ENCODE measurements at regions of chr12 and their contacts with region 1.

Region 1: DNA sequence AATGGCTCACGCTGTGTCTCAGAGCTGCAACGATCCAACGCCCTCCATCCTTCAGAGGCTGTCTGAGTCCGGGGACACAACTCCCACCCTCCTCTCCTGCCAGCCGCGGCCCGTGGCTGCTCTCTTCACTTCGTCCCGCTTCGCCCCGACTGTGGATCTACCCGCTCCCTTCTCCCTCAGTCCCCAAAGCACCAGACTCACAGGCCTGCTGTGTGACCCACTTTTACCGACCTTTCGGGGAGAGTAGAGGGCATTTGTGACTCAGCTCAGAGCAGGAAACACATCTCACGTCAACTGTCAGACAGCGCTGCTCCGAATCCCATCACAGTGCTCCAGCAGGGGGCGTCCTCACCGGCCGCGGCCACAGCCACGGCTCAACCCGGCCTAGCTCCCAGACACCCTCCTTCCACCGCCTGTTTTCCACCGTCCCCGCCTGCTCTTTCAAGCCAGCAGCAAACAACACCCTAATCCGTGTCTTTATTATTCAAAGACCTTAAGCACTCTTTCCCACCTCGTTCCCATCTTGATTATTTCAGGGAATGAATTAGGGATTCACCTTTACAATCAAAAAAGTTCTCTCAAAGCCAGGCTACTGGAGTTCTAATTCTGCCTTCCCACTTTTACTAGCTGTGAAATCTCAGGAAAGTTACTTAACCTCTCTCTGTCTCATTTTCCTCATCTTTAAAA is 5.0 kb upstream of the AQP2 start:
- DNase-seq: peak; percentile 91
- H3K4me3 ChIP-seq: peak overlapping the region; percentile 33 to 36; a peak in 3 of 4 replicates
- H3K27ac ChIP-seq: peak overlapping the region in 1 of 2 experiments; percentile 29; a peak in 1 of 4 replicates
- H3K4me1 ChIP-seq: peaks cover 0 to 17% of the 10 kb centered on the region in 2 experiments; a peak in 1 of 4 replicates
- H3K27me3 ChIP-seq: no peaks in the 10 kb centered on the region
- CTCF ChIP-seq: peak; percentile 96
- EP300 ChIP-seq: no peak; a peak in 1 of 4 replicates
- RAD21 ChIP-seq: peak; percentile 63

Region 2: GRCh38 chr12:49866859-49867579 is 78.5 kb before region 1 on chr12:
- CTCF ChIA-PET with region 1: interaction called, 101 read pairs
- POLR2A ChIA-PET with region 1: interaction called, 5 read pairs
- DNase-seq: peak; percentile 89
- H3K4me3 ChIP-seq: no peak overlapping the region; a peak in 1 of 4 replicates
- H3K27ac ChIP-seq: no peak overlapping the region
- H3K4me1 ChIP-seq: peaks cover 32 to 52% of the 10 kb centered on the region in 2 experiments
- H3K27me3 ChIP-seq: no peaks in the 10 kb centered on the region
- CTCF ChIP-seq: peak; percentile 96
- EP300 ChIP-seq: no peak
- RAD21 ChIP-seq: peak; percentile 93

Region 3: GRCh38 chr12:49893753-49894752 is 51.5 kb before region 1 on chr12:
- CTCF ChIA-PET with region 1: interaction called, 16 read pairs
- POLR2A ChIA-PET with region 1: no interaction called
- DNase-seq: no peak
- H3K4me3 ChIP-seq: no peak overlapping the region
- H3K27ac ChIP-seq: peak overlapping the region in 1 of 2 experiments; percentile 12; a peak in 1 of 4 replicates
- H3K4me1 ChIP-seq: peaks cover 5 to 17% of the 10 kb centered on the region in 2 experiments; a peak in 1 of 4 replicates
- H3K27me3 ChIP-seq: no peaks in the 10 kb centered on the region
- CTCF ChIP-seq: no peak
- EP300 ChIP-seq: no peak
- RAD21 ChIP-seq: no peak

Region 4: GRCh38 chr12:49922349-49923034 is 23.0 kb before region 1 on chr12:
- CTCF ChIA-PET with region 1: interaction called, 90 read pairs
- POLR2A ChIA-PET with region 1: interaction called, 3 read pairs
- DNase-seq: no peak
- H3K4me3 ChIP-seq: no peak overlapping the region
- H3K27ac ChIP-seq: no peak overlapping the region
- H3K4me1 ChIP-seq: 0 out of 4 replicates have a peak, but pooled peaks cover 0 to 4% of the 10 kb centered on the region in 2 experiments
- H3K27me3 ChIP-seq: no peaks in the 10 kb centered on the region
- CTCF ChIP-seq: no peak
- EP300 ChIP-seq: no peak
- RAD21 ChIP-seq: no peak

Region 5: GRCh38 chr12:50038336-50038735 is 92.8 kb after region 1 on chr12:
- CTCF ChIA-PET with region 1: interaction called, 10 read pairs
- POLR2A ChIA-PET with region 1: no interaction called
- DNase-seq: no peak
- H3K4me3 ChIP-seq: no peak overlapping the region
- H3K27ac ChIP-seq: no peak overlapping the region
- H3K4me1 ChIP-seq: peaks cover 0 to 3% of the 10 kb centered on the region in 2 experiments; a peak in 1 of 4 replicates
- H3K27me3 ChIP-seq: no peaks in the 10 kb centered on the region
- CTCF ChIP-seq: no peak
- EP300 ChIP-seq: no peak
- RAD21 ChIP-seq: no peak

Region 6: GRCh38 chr12:50111693-50112455 is 166.3 kb after region 1 on chr12 and contains the start of gene COX14:
- CTCF ChIA-PET with region 1: interaction called, 11 read pairs
- POLR2A ChIA-PET with region 1: no interaction called
- DNase-seq: peak; percentile 96
- H3K4me3 ChIP-seq: peak within 1 kb of the TSS; percentile 67 to 99
- H3K27ac ChIP-seq: peak within 1 kb of the TSS; percentile 69 to 95
- H3K4me1 ChIP-seq: peaks cover 12 to 18% of the 10 kb centered on the region in 2 experiments; a peak in 2 of 4 replicates
- H3K27me3 ChIP-seq: no peaks in the 10 kb centered on the region
- CTCF ChIP-seq: peak; percentile 98
- EP300 ChIP-seq: no peak
- RAD21 ChIP-seq: peak; percentile 49
- polyA plus RNA-seq, gene COX14: 204 and 218 TPM in 2 replicates

Measured in SK-N-SH (cell line).